GM10248 (cell line): ENCODE measurements at regions of chr1 and their contacts with region 1.

Region 1: GRCh38 chr1:219812491-219813203 is 115.7 kb downstream of the SLC30A10 start:
- DNase-seq: peak; percentile 53
- CTCF ChIP-seq: peak; percentile 88

Region 2: DNA sequence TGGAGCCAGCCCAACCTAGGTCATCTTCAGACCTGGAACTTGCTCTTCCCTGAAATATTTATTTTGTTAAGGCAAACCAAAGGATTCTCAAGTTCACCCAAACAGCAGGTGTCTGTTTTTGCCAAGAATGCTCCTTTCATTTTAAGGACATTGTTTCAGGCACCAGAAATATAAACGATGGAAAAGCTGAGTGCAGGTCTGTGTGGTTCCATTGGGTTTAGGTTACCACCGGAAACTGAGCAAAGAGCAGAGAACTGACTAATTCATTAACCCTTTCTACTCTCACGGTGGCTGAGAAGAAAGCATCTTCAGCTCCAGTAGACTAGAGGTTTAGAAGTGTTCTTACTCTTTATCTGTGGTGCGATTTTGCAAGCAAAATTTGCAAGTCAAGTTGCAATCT is 161.8 kb before region 1 on chr1:
- CTCF ChIA-PET with region 1: no interaction called
- POLR2A ChIA-PET with region 1: no interaction called
- DNase-seq: no peak
- CTCF ChIP-seq: no peak

Region 3: DNA sequence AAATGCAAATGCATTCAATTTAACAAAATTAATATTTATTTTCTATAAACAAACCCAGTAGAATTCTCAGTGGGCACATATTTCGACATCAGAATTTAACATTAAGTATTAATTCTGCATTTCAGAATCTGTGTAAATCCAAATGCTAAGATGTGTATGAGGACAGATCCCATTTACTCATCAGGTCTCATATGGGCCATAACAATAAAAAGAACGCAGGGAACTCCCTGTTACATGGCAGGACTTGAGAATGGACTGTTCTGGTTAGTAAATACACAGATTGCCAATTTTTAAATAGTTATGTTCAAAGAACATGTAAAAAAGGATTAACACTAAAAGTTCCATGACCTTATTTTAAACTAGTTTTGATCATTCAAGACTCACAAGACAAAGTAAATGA is 11.7 kb after region 1 on chr1:
- CTCF ChIA-PET with region 1: interaction called, 18 read pairs
- POLR2A ChIA-PET with region 1: no interaction called
- DNase-seq: no peak
- CTCF ChIP-seq: no peak